Posterior vena cava (tissue), 2 donors: ENCODE measurements at regions of chr22 and their contacts with region 1.

Region 1: DNA sequence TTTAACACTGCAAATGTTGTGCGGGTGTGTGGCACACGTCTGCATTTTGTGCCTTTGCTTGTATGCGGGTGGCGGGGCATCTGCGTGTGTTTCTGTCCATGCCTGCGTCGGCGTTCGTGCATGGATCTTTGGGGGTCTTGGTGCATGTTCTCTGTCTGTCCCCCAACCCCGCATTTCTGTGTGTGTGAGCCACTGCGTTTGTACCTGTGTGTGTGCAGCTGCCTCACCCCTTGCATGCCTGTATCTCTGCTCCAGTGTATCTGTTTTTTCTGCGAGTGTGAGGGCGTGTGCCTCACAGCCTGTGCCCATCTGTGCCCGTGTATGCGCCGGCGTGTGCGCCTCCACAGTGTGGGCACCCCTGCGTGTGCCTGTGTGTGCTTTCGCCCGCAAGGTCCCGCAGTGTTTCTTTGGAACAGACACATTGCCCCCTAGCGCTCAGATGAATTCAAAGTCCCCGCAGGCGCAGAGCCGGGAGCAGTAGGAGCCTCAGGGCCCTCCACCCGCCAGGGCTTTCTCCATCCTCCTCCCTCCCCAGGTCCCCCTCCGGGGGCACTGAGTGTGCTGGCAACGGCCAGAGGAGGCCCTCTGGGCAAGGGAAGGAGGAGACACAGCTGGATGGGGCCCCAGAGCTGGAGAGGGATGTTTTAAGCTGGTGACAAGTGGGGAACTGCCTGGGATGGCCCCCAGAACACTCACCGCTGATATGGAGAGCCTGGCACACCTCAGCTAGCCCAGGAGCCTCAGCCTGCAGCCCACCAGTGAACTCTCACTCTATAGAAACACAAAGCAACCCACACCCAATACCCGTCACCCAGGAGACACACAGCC is 3.1 kb upstream of the MN1 start:
- DNase-seq: peak; percentile 88

Region 2: DNA sequence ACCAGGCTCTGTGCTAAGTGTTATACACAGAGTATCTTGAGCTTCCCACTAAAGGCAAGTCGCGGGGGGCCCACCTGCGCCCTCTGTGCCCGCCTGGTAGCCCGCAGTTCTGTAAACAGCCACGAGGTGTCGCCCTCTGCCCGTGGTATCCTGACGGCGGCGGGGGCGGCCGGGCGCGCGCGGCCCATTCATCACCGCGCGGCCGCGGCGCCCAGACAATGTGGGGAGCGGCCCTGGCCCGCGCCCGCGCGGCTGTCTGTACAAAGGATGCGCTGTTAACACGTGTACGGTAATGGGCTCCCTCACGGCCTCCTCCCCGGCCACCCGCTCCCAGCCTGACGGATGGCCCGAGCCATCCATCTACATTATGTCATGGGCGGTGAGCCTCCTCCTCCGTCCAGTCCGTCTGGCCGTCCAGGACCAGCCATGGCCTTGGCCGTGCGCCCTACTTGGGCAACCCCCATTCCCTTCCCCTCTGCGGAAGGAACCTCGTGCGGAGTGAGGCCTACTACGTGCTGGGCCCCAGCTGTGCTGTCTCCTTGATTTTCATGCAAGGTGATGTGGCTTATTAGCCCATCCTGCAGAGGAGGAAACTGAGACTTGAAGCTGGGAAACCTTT is 1047.9 kb before region 1 on chr22:
- intact Hi-C with region 1: loop called (anchors 2 to 10 kb)
- DNase-seq: peak; percentile 89

Region 3: DNA sequence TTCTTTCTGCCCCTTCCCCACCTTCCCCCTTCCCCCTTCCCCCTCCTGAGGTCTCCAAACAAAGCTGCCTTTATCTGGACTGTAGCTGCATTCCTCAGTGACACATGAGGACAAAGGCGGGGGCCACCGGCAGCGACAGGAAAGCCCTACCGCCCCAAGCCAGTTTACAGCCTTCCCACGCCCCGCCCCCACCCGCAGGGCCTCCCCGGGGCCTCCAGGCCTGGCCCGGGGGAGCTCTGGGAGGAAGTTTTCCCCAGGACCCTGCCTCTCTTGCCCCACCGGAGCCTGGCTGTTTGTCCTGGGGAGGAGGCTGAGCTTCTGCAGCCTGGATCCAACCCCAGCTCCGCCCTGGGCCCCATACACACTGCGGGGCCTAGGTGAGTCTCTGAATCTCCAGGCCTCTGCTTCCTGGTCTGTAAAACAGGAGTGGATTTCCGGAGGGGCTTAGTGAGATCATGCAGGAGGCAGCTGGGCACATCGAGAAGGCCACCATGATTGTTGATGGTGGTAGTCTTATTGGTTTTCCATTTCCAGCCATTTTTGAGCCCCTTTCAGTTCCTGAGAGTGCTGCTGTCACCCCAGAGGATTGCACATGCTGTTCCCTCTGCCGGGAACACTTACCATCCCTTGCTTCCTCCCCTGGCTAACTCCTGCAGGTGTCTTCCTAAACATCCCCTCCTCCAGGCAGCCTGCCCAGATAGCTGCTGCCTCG is 133.8 kb before region 1 on chr22:
- intact Hi-C with region 1: loop called in 1 of 2 experiments (anchors 5 kb)
- DNase-seq: no peak